OCI-LY7 (cell line): ENCODE measurements at regions of chr19 and their contacts with region 1.

Region 1: DNA sequence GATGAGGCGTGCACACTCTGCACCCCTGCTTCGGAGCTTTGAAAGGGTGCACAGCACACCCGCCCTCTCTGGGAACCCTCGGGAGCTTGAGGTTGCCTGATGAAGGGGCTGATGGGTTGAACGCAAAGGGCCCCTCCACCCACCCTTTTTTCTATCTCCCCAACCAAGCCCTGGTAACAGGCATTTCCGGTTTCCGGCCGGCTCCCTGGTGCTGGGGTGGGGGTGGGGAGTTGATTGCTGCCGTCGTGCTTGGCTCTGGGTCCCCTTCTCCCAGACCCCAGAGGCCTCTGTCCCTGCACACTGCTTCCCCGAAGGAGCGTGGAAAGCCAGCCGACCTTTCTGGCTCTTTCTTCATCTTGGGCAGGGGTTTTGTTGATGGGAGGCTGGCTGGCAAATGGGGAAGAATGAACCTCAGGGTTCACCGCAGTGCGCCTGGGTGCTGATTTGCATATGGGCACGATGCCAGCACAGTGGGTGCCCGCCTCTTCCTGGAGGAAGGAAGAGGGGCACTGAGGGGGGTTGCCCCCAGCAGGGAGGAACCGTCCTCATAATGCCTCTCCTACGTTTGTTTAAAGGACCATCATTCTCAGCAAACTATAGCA is 29.1 kb downstream of the VAV1 start:
- DNase-seq: peak; percentile 97
- H3K4me3 ChIP-seq: peak overlapping the region; percentile 66
- H3K27ac ChIP-seq: peak overlapping the region; percentile 94
- H3K4me1 ChIP-seq: peaks cover 75% of the 10 kb centered on the region
- CTCF ChIP-seq: no peak

Region 2: DNA sequence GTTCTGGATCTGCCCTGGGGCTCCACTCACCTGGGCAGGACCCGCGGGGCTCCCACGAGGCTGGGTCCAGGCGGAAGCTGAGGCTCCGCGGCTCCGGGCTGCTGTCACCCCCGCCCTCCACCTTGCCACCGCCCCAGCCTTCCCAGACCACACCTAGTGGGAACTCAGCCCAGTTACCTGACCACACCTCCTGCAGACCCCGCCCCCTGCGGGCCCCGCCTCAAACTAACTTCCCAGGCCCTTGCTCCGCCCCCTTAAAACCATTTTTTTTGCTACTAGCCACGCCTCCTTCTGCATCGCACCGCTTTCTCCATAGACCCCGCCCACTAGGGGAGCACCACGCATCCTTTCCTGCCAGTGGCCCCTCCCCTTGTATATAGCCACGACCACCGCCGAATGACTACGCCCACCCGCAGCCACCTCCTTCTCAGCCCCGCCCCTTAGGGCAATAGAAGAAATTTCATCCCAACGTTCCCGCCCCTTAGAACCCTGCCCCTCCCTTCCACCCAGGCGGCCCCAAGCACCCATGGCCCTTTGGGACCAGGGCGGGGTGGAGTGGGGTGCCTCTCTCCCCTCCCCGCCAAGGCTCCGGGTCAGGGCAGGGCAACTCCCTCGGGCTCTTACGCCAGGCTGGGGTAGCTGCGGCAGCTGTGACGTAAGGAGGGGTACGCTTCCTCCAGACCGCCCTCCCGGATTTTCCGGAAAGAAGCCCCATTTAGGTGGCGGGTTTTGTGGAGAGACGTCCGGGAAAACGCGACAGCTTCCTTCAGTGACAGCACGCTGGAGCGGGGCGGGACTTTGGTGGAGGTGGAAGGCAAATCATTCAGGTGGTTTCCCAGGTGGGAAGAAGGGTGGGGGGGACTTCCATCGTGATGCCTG is 34.0 kb before region 1 on chr19 and contains the start of gene SH2D3A:
- CTCF ChIA-PET with region 1: interaction called, 4 read pairs
- POLR2A ChIA-PET with region 1: interaction called, 25 read pairs
- intact Hi-C with region 1: loop called (anchors 1 kb)
- DNase-seq: peak; percentile 99
- H3K4me3 ChIP-seq: peak within 1 kb of the TSS; percentile 75
- H3K27ac ChIP-seq: peak within 1 kb of the TSS; percentile 47
- H3K4me1 ChIP-seq: peaks cover 32% of the 10 kb centered on the region
- CTCF ChIP-seq: no peak
- total RNA-seq, gene SH2D3A: 7.8 and 8.5 TPM in 2 replicates